ENCODE measurements at regions of chr4 and their contacts with region 1.

Region 1: DNA sequence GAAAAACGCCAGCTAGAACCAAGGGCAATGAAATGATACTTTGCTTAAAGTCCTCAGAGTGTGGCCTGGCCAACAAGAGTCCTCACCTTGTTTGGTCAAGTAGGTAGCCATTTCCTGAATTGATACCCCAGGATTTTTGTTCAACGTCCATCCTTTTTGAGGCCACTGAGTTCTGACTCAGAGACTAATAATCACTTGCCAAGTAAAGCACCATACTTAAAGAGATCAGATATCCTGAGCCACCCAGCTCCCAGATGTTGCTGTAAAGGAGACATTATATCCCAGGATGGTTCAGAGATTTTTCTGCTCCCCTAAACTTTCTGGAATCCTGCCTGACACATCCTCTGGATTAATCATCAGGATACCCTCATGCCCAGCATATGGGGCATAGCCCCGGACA is 190.9 kb downstream of the RAP1GDS1 start:
- DNase-seq: no peak
- H3K4me3 ChIP-seq: no peak overlapping the region
- H3K27ac ChIP-seq: no peak overlapping the region
- H3K4me1 ChIP-seq: no peaks in the 10 kb centered on the region
- H3K27me3 ChIP-seq: no peaks in the 10 kb centered on the region
- CTCF ChIP-seq: no peak
- EP300 ChIP-seq: no peak
- POLR2A ChIP-seq: no peak

Region 2: DNA sequence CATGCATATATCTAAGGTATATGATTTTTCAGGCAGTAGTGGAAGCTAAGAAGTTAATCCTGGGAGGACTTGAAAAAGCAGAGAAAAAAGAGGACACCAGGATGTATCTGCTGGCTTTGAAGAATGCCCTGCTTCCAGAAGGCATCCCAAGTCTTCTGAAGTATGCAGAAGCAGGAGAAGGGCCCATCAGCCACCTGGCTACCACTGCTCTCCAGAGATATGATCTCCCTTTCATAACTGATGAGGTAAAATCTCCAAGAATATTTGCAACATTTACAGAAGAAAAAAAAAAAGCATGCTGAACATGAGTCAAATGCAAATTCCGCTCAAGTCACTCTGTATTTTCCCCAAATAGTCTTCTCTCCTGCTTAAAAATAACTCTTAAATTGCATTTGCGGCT is 1154.6 kb after region 1 on chr4:
- intact Hi-C with region 1: loop called in 1 of 4 experiments (anchors 10 kb)
- DNase-seq: no peak
- H3K4me3 ChIP-seq: no peak overlapping the region
- H3K27ac ChIP-seq: no peak overlapping the region
- H3K4me1 ChIP-seq: no peaks in the 10 kb centered on the region
- H3K27me3 ChIP-seq: no peaks in the 10 kb centered on the region
- CTCF ChIP-seq: no peak
- EP300 ChIP-seq: no peak
- POLR2A ChIP-seq: no peak

Measured in ovary (tissue), 10 donors.